ENCODE measurements at regions of chr7 and their contacts with region 1.

Region 1: GRCh38 chr7:76509931-76510877 is at the start of gene UPK3B:
- DNase-seq: peak; percentile 14 to 81 (median 56)
- ATAC-seq: peak; percentile 28
- H3K4me3 ChIP-seq: no peak within 1 kb of the TSS
- H3K27ac ChIP-seq: peak within 1 kb of the TSS in 1 of 2 donors; percentile 18
- H3K4me1 ChIP-seq: peaks cover 4 to 20% of the 10 kb centered on the region in 2 donors
- H3K27me3 ChIP-seq: no peaks in the 10 kb centered on the region
- CTCF ChIP-seq: no peak
- polyA plus RNA-seq, gene UPK3B: 7.3 to 40.8 (median 20.0) TPM

Region 2: DNA sequence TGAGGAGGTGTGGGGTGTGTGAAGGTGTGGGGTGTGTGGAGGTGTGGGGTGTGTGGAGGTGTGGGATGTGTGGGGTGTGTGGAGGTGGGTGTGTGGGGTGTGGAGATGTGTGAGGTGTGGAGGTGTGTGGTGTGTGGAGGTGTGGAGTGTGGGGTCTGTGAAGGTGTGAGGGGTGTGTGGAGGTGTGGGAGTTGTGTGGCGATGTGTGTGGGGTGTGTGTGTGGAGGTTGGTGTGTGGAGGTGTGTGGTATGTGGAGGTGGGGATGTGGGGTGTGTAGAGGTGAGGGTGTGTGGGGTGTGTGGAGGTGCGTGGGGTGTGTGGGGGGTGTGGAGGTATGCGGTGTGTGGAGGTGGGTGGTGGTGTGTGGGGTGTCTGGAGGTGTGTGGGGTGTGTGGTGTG is 487.2 kb after region 1 on chr7:
- intact Hi-C with region 1: loop called in 1 of 2 experiments (anchors 10 kb)
- DNase-seq: peak in 1 of 4 donors; percentile 58
- ATAC-seq: no peak
- H3K4me3 ChIP-seq: no peak overlapping the region
- H3K27ac ChIP-seq: no peak overlapping the region
- H3K4me1 ChIP-seq: no peaks in the 10 kb centered on the region
- H3K27me3 ChIP-seq: no peaks in the 10 kb centered on the region
- CTCF ChIP-seq: no peak

Measured in left lung (tissue), 14 donors.